ENCODE measurements at regions of chr7 and their contacts with region 1.

Region 1: GRCh38 chr7:145848691-145849090 is 267.9 kb upstream of the CNTNAP2 start:
- DNase-seq: peak; percentile 30 to 48
- H3K4me3 ChIP-seq: no peak overlapping the region
- H3K4me3 Mint-ChIP-seq: no peak overlapping the region
- H3K27ac Mint-ChIP-seq: no peak overlapping the region
- H3K4me1 ChIP-seq: no peaks in the 10 kb centered on the region
- H3K4me1 Mint-ChIP-seq: no peaks in the 10 kb centered on the region
- H3K27me3 ChIP-seq: no peaks in the 10 kb centered on the region
- H3K27me3 Mint-ChIP-seq: peaks cover 3% of the 10 kb centered on the region
- CTCF ChIP-seq: peak; percentile 58 to 63

Region 2: DNA sequence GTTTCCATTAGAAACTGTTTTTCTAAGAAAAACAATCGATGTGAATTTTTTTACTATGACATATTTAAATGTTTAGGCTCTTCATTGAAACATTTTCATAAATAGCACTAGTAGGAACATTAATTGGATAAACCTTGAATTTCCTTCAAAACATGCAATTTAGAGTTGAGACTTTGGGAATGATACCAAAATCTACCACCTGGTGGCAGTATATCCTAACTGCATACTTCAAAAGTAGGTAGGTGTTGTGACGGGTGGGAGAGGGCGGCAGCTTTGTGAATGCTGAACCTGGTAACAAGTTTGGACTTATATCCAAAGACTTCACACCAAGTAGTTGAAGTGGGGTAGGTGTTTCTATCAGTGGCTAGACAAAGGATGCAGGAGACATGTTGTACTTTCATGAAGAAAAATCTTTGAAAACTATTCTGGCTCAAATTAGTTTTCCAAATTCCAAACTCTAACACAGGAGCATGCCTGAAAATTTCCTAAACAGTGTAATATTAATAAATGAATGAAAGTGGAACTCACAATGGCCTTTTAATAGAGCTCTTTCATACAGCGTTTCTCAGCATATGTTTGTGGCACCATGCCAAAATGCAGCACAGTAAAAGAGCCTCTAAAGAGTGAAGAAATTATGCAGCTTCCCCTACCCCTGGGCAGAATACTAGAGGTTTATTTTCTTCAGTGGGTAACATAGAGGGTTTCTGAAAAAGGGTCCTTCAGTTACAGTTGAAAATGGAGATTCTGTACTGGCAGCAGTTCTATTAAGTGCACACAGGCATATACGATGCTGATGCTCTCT is 811.9 kb before region 1 on chr7:
- CTCF ChIA-PET with region 1: no interaction called
- POLR2A ChIA-PET with region 1: no interaction called
- intact Hi-C with region 1: loop called (anchors 1 kb)
- DNase-seq: peak; percentile 43 to 69
- H3K4me3 ChIP-seq: no peak overlapping the region
- H3K4me3 Mint-ChIP-seq: no peak overlapping the region
- H3K27ac Mint-ChIP-seq: no peak overlapping the region
- H3K4me1 ChIP-seq: no peaks in the 10 kb centered on the region
- H3K4me1 Mint-ChIP-seq: no peaks in the 10 kb centered on the region
- H3K27me3 ChIP-seq: no peaks in the 10 kb centered on the region
- H3K27me3 Mint-ChIP-seq: peaks cover 11% of the 10 kb centered on the region
- CTCF ChIP-seq: peak; percentile 70 to 78

Region 3: GRCh38 chr7:145817687-145818086 is 31.0 kb before region 1 on chr7:
- CTCF ChIA-PET with region 1: no interaction called
- POLR2A ChIA-PET with region 1: no interaction called
- intact Hi-C with region 1: loop called (anchors 1 kb)
- DNase-seq: no peak
- H3K4me3 ChIP-seq: no peak overlapping the region
- H3K4me3 Mint-ChIP-seq: no peak overlapping the region
- H3K27ac Mint-ChIP-seq: no peak overlapping the region
- H3K4me1 ChIP-seq: no peaks in the 10 kb centered on the region
- H3K4me1 Mint-ChIP-seq: no peaks in the 10 kb centered on the region
- H3K27me3 ChIP-seq: no peaks in the 10 kb centered on the region
- H3K27me3 Mint-ChIP-seq: no peaks in the 10 kb centered on the region
- CTCF ChIP-seq: no peak

Region 4: DNA sequence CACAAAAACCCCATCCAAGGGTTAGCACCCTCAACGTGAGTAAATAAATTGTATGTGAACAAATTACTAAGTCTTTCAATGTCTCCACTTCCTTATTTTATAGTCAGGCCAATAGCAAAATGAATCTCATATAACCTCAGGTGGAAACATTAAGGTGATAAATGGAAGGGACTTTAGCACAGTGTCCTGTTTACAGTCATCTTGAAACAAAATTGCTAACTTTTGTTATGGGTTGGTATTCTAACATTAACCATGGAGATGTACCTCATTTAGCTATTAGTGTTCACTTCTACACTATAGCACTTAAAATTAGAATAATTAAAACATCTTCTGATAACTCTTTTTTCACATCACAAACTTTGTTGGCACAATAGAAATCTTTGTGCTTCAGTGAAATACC is 12.1 kb after region 1 on chr7:
- CTCF ChIA-PET with region 1: no interaction called
- POLR2A ChIA-PET with region 1: no interaction called
- intact Hi-C with region 1: no loop called
- DNase-seq: no peak
- H3K4me3 ChIP-seq: no peak overlapping the region
- H3K4me3 Mint-ChIP-seq: no peak overlapping the region
- H3K27ac Mint-ChIP-seq: no peak overlapping the region
- H3K4me1 ChIP-seq: no peaks in the 10 kb centered on the region
- H3K4me1 Mint-ChIP-seq: no peaks in the 10 kb centered on the region
- H3K27me3 ChIP-seq: no peaks in the 10 kb centered on the region
- H3K27me3 Mint-ChIP-seq: no peaks in the 10 kb centered on the region
- CTCF ChIP-seq: no peak